Caco-2 (cell line): ENCODE measurements at regions of chr11 and their contacts with region 1.

Region 1: DNA sequence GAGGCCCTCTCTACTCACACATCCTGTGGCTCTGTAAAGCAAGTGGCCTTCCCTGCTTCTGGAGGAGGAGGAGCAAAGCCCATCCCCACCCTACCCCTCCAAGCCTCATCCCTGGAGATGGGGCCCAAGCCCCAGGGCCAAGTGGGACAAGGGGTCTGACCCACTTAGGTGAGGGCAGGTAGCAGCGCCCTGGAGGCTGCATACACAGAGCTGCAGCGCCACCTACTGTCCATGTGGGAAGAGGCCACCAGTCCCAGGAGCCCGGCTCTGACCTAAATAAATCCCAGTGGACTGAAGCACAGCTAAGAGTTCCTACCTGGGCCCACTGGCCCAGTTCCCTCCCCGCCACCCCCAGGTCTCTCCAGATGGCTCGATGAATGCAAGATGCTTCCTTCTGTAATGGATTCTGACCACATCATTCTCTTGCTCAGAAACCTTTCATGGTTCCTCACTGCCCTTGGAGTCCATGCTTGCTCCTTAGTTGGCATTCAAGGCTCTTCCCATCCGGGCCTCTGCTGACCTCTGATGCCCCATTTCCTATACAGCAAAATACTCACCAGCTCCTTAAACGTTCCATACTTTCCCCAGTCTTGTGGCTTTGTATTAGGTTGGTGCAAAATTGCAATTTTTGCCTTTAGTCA is 62.1 kb downstream of the THAP12 start:
- DNase-seq: peak; percentile 90 to 94
- H3K4me3 ChIP-seq: no peak overlapping the region
- H3K4me3 Mint-ChIP-seq: no peak overlapping the region
- H3K27ac Mint-ChIP-seq: no peak overlapping the region
- H3K4me1 ChIP-seq: peaks cover 12% of the 10 kb centered on the region
- H3K4me1 Mint-ChIP-seq: no peaks in the 10 kb centered on the region
- H3K27me3 ChIP-seq: no peaks in the 10 kb centered on the region
- H3K27me3 Mint-ChIP-seq: no peaks in the 10 kb centered on the region
- CTCF ChIP-seq: peak; percentile 99

Region 2: DNA sequence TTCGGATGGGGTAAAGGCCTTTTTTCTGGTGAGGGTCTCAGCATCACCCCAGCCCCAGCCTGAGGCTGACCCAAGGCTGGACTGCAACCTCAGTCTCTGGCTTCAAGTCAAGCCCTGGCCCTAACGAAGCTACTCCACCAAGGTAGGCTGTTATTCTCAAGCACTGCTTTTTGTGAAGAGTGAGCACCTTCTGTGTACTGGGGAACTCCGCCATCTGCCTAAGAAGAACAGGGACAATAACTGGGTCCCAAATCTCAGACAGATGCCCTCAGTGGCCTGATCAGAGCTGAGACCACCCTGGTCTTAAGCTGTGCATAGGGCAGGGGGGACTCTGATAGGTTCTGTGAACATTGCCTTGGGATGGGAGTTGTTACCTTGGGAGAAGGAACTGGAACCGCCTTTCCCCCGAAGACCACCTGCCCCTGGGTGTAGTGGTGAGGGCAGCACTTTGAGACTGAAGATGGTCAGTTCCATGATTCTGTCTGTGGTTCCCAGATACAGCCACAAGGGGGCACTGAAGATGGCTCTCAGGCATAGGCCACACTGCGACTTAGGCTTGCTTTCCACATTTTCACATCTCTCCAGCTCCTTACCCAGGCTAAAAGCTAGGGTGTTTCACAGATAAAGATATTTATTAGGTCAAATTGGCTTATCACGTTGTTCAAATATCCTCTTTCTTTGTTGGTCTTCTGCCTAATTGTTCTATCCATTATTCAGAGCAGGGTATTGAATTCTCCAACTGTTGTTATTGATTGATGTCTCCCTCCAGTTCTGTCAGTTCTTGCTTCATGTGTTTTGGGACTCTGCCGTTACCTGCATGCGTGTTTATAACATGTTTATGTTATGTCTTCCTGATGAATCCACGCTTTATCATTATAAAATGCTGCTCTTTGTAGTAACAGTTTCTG is 515.7 kb before region 1 on chr11:
- CTCF ChIA-PET with region 1: no interaction called
- POLR2A ChIA-PET with region 1: no interaction called
- intact Hi-C with region 1: loop called (anchors 1 kb)
- DNase-seq: peak; percentile 79 to 89
- H3K4me3 ChIP-seq: no peak overlapping the region
- H3K4me3 Mint-ChIP-seq: no peak overlapping the region
- H3K27ac Mint-ChIP-seq: no peak overlapping the region
- H3K4me1 ChIP-seq: no peaks in the 10 kb centered on the region
- H3K4me1 Mint-ChIP-seq: no peaks in the 10 kb centered on the region
- H3K27me3 ChIP-seq: no peaks in the 10 kb centered on the region
- H3K27me3 Mint-ChIP-seq: no peaks in the 10 kb centered on the region
- CTCF ChIP-seq: peak; percentile 98

Region 3: GRCh38 chr11:75896843-75897419 is 421.9 kb before region 1 on chr11:
- CTCF ChIA-PET with region 1: interaction called, 7 read pairs
- POLR2A ChIA-PET with region 1: no interaction called
- intact Hi-C with region 1: loop called (anchors 1 kb)
- DNase-seq: peak in 1 of 2 experiments; percentile 56
- H3K4me3 ChIP-seq: no peak overlapping the region
- H3K4me3 Mint-ChIP-seq: no peak overlapping the region
- H3K27ac Mint-ChIP-seq: no peak overlapping the region
- H3K4me1 ChIP-seq: no peaks in the 10 kb centered on the region
- H3K4me1 Mint-ChIP-seq: no peaks in the 10 kb centered on the region
- H3K27me3 ChIP-seq: no peaks in the 10 kb centered on the region
- H3K27me3 Mint-ChIP-seq: no peaks in the 10 kb centered on the region
- CTCF ChIP-seq: peak; percentile 68 to 81

Region 4: DNA sequence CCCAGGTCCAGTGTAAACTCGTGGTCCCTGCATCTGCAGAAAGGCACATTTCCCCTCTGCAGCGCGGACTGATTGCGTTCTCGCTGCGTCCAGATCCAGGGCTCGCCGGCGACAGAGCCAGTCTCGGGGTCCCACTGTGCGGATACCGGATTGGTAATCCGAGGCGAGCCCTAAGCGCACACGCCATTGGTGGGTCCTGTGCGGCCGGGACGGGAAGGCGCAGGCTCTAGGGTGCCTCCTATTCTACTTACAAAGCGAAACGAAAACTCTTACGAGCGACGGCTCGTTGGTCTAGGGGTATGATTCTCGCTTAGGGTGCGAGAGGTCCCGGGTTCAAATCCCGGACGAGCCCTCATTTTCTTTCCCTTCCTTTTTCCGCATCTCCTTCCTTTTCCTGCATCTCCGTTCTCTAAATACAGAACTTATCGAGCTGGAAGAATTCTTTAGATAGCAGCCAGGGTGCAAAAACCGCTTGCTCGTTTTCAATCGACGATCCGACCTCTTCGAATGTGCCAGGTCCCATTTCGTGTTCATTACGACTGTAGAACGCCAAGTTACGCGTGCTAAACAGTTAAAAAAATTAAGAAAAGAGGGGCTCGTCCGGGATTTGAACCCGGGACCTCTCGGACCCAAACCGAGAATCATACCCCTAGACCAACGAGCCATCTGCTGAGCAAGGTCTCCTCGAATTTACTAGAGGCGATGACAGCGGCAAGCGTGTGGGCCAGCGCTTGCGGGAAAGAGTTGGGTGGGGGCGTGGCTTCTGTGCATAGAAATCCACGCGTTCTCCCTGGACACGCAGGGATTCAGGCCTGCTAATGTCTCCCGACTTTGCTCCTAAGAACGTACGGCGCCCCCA is 83.4 kb before region 1 on chr11:
- CTCF ChIA-PET with region 1: interaction called, 3 read pairs
- POLR2A ChIA-PET with region 1: no interaction called
- intact Hi-C with region 1: loop called (anchors 2 kb)
- DNase-seq: peak; percentile 80 to 86
- H3K4me3 ChIP-seq: peak overlapping the region; percentile 43
- H3K4me3 Mint-ChIP-seq: peak overlapping the region; percentile 93
- H3K27ac Mint-ChIP-seq: peak overlapping the region; percentile 89
- H3K4me1 ChIP-seq: peaks cover 10% of the 10 kb centered on the region
- H3K4me1 Mint-ChIP-seq: peaks cover 15% of the 10 kb centered on the region
- H3K27me3 ChIP-seq: no peaks in the 10 kb centered on the region
- H3K27me3 Mint-ChIP-seq: peaks cover 3% of the 10 kb centered on the region
- CTCF ChIP-seq: no peak

Region 5: GRCh38 chr11:76277298-76278175 is 41.3 kb before region 1 on chr11:
- CTCF ChIA-PET with region 1: no interaction called
- POLR2A ChIA-PET with region 1: no interaction called
- intact Hi-C with region 1: no loop called
- DNase-seq: no peak
- H3K4me3 ChIP-seq: no peak overlapping the region
- H3K4me3 Mint-ChIP-seq: no peak overlapping the region
- H3K27ac Mint-ChIP-seq: no peak overlapping the region
- H3K4me1 ChIP-seq: no peaks in the 10 kb centered on the region
- H3K4me1 Mint-ChIP-seq: no peaks in the 10 kb centered on the region
- H3K27me3 ChIP-seq: no peaks in the 10 kb centered on the region
- H3K27me3 Mint-ChIP-seq: no peaks in the 10 kb centered on the region
- CTCF ChIP-seq: no peak

Region 6: DNA sequence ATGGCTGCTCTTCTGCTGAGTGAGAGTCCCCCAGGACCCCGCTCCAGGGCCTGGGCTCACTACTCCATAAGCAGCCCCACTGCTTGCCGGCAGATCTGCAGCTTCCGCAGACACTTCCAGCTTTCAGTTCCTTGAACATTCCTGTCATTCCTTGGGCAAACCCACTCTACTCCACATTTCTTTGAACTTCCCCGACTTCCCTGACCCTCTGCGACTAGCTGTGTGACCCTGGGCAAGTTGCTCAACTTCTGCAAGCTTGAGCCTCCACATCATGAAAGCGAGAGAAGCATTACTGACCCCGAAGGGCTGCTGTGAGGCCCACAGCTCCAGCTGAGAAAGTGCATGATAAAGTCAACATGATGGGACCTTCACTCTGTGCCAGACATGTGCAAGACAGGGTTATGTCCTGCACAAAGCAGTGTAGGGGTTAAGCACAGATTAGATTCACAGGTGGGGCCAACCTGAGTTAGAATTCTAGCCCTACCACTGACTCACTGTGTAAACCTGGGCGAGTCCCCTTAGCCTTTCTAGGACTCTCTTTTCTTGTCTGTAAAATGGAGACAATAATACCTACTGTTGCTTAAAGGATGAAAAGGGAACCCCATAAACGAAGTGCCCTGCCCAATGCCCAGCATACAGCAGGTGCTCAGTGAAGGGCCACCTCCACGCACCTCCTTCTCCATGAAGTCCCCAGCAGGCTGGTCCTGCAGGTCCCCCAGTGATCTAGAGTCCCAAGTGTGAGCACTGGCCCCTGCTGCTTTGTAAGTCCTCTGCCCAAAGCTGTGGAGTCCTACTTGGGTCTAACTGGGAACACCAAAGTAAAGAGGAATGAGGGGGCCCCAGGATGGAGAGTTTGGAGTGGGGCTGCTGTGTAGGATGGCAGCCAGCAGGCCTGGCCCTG is 10.5 kb after region 1 on chr11:
- CTCF ChIA-PET with region 1: interaction called, 20 read pairs
- POLR2A ChIA-PET with region 1: no interaction called
- intact Hi-C with region 1: no loop called
- DNase-seq: peak; percentile 97 to 99
- H3K4me3 ChIP-seq: no peak overlapping the region
- H3K4me3 Mint-ChIP-seq: peak overlapping the region; percentile 51
- H3K27ac Mint-ChIP-seq: peak overlapping the region; percentile 84
- H3K4me1 ChIP-seq: peaks cover 39% of the 10 kb centered on the region
- H3K4me1 Mint-ChIP-seq: peaks cover 38% of the 10 kb centered on the region
- H3K27me3 ChIP-seq: no peaks in the 10 kb centered on the region
- H3K27me3 Mint-ChIP-seq: no peaks in the 10 kb centered on the region
- CTCF ChIP-seq: no peak